AG04449 (cell line): ENCODE measurements at regions of chr17 and their contacts with region 1.

Region 1: GRCh38 chr17:44170499-44171201 is at the start of gene ASB16:
- DNase-seq: no peak
- H3K4me3 ChIP-seq: no peak within 1 kb of the TSS
- CTCF ChIP-seq: no peak

Region 2: GRCh38 chr17:43907425-43907981 is 263.1 kb before region 1 on chr17 and contains the start of gene MPP2:
- CTCF ChIA-PET with region 1: interaction called, 15 read pairs
- POLR2A ChIA-PET with region 1: no interaction called
- DNase-seq: no peak
- H3K4me3 ChIP-seq: peak within 1 kb of the TSS; percentile 74
- CTCF ChIP-seq: peak; percentile 32

Region 3: DNA sequence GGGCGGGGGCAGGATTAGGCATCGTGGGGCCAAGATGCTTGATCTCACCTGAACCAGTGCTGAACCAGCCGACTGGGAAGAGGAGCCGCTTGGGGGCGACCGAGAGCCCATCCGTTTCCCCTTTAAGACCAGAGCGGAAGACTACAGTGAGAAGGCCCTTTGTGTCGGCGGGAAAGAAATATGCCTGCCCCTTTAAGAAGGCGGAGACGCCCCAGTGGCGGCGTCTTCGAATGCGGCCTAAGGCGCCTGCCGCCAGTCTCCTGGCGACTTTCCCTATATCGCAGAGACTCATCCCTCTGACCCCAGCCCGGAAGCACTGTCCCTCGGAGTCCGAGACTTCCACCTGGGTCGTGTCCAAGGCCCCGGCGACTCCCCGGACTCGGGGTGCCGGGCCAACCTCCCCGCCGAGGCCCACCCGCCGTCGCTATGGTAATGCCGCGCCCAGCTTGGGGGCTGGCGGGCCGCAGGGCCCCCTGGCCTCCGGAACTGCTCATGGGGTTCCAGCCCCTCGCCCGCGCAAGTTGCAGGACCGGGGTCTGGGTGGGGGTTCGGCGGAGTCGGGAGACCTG is 28.8 kb before region 1 on chr17 and contains the start of gene HROB:
- CTCF ChIA-PET with region 1: interaction called, 11 read pairs
- POLR2A ChIA-PET with region 1: interaction called, 3 read pairs
- DNase-seq: peak; percentile 87
- H3K4me3 ChIP-seq: peak within 1 kb of the TSS; percentile 77
- CTCF ChIP-seq: peak; percentile 92

Region 4: GRCh38 chr17:44149750-44150329 is 20.8 kb before region 1 on chr17:
- CTCF ChIA-PET with region 1: interaction called, 72 read pairs
- POLR2A ChIA-PET with region 1: interaction called, 3 read pairs
- DNase-seq: no peak
- H3K4me3 ChIP-seq: no peak overlapping the region
- CTCF ChIP-seq: no peak

Region 5: DNA sequence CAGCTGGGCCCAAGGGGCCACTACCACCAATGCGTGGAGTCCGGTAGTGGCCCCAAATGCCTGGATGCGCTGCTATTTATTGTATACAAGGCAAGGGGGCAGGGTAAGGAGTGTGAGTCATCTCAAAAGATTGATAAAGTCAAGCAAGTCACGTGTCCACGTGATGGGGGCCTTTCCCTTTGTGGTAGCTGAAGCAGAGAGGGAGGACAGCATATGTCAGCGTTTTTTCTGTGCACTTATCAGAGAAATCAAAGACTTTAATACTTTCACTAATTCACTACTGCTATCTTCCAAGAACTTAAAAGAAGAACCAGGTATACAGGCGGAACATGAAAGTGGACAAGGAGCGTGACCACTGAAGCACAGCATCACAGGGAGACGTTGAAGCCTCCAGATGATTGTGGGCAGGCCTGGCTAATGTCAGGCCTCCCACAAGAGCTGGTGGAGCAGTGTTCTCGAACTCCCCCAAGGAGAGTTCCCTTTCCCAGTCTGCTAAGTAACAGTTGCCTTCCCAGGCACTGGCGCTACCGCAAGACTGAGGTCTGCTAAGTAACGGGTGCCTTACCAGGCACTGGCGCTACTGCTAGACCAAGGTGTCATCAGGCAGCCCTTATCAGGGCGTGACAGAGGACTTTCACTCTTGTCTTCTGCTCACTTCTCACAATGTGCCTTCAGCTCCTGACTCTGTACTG is 11.0 kb before region 1 on chr17:
- CTCF ChIA-PET with region 1: interaction called, 72 read pairs
- POLR2A ChIA-PET with region 1: no interaction called
- DNase-seq: no peak
- H3K4me3 ChIP-seq: no peak overlapping the region
- CTCF ChIP-seq: no peak

Region 6: GRCh38 chr17:44186307-44187130 is 15.9 kb after region 1 on chr17 and contains the start of gene TMUB2:
- CTCF ChIA-PET with region 1: interaction called, 41 read pairs
- POLR2A ChIA-PET with region 1: interaction called, 5 read pairs
- DNase-seq: peak; percentile 97
- H3K4me3 ChIP-seq: peak within 1 kb of the TSS; percentile 100
- CTCF ChIP-seq: no peak